GM18951 (cell line): ENCODE measurements at regions of chr16 and their contacts with region 1.

Region 1: GRCh38 chr16:74563828-74564263 is 43.1 kb downstream of the GLG1 start:
- POLR2A ChIP-seq: no peak

Region 2: DNA sequence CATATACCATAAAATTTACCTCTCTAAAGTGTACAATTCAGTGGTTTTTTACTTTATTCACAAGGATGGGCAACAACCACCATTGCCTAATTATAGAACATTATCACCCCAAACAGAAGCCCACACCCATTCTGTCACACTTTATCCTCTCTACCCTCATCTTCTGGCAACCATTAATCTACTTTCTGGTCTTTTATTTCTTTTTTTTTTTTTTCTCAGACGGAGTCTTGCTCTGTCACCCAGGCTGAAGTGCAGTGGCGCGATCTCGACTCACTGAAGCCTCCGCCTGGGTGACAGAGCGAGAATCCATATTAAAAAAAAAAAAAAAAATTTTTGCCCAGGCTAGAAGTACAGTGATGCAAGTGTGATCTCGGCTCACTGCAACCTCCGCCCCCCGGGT is 51.9 kb before region 1 on chr16:
- in situ Hi-C with region 1: loop called (anchors 5 kb)
- POLR2A ChIP-seq: no peak